ENCODE measurements at regions of chr2 and their contacts with region 1.

Region 1: GRCh38 chr2:21281791-21282514 is 158.2 kb downstream of the TDRD15 start:
- DNase-seq: no peak
- H3K4me3 ChIP-seq: no peak overlapping the region
- CTCF ChIP-seq: no peak

Region 2: DNA sequence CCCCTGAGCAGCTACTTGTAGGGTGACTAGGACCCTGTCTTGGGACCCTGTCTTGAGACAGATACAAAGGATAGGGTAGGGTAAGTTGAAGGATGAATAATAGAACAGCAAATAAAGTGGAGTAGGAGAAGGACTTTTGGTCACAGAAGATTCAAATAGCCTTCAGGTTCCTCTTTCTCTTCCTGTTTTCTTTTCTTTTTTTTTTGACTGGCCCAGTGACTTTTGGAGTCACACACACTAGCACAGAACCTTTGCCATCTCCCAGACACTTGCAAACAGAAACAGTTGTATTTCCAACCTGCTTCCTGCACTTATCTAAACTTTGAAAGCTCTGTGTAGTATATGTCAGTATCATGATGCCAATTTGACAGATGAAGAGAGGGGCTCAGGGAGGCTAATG is 50.0 kb before region 1 on chr2:
- in situ Hi-C with region 1: no loop called
- DNase-seq: no peak
- H3K4me3 ChIP-seq: no peak overlapping the region
- CTCF ChIP-seq: no peak

Region 3: GRCh38 chr2:21346984-21347383 is 65.0 kb after region 1 on chr2:
- in situ Hi-C with region 1: loop called (anchors 5 kb)
- DNase-seq: no peak
- H3K4me3 ChIP-seq: no peak overlapping the region
- CTCF ChIP-seq: no peak

Region 4: GRCh38 chr2:21382701-21383520 is 101.0 kb after region 1 on chr2:
- in situ Hi-C with region 1: no loop called
- DNase-seq: no peak
- H3K4me3 ChIP-seq: no peak overlapping the region
- CTCF ChIP-seq: no peak